ENCODE measurements at regions of chr1 and their contacts with region 1.

Region 1: DNA sequence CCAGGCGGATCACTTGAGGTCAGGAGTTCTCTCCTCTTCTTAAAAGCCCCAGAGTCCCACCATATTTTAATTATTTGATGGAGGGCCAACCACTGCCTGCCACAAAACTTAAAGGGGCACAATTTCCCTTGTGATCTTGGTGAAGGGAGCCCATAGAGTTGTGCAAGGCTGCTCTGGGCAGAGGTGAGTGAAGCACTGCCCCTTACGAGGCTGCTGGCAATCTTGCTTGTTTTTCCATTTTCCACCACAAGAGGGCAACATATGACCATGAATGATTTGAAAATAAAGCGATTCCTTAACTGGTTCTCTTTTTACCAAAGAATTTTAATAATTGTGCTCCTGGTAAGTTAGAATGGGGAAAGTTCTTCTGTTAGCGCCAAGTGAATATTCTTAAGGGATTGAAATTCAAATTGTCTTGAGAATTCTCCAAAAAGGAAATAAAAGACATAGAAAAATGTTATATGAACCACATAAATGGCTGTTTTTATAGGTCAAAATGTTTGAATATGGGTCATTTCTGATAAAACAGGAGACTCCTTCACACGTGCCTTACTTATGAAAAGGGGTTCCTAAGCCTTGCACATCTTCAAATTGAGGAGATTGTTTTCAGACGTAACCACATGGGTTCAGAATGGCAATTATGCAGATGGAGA is 22.7 kb downstream of the PGM1 start:
- DNase-seq: peak in 2 of 3 donors; percentile 31 to 47
- ATAC-seq: peak; percentile 63 to 66
- H3K4me3 ChIP-seq: no peak overlapping the region
- H3K27ac ChIP-seq: no peak overlapping the region
- H3K4me1 ChIP-seq: no peaks in the 10 kb centered on the region
- H3K27me3 ChIP-seq: no peaks in the 10 kb centered on the region

Region 2: DNA sequence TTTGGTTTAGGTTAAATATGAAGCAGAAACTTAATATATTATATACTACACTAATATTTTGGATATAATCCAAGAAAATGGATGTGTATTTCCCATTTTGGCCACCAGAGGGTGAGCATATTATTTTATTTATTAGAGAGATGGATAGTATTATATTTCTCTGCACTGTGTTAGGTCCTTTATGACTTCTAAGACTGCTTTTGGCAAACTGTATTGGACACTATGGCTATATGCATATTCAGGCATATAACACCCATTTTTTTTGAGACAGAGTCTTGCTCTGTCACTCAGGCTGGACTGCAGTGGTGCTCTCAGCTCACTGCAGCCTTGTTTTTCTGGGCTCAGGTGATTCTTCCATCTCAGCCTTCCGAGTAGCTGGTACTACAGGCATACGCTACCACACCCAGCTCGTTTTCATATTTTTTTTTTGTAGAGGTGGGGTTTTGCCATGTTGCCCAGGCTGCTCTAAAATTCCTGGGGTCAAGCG is 40.5 kb before region 1 on chr1:
- intact Hi-C with region 1: loop called in 1 of 4 experiments (anchors 2 kb)
- DNase-seq: no peak
- ATAC-seq: peak; percentile 16 to 51
- H3K4me3 ChIP-seq: no peak overlapping the region
- H3K27ac ChIP-seq: no peak overlapping the region
- H3K4me1 ChIP-seq: no peaks in the 10 kb centered on the region
- H3K27me3 ChIP-seq: no peaks in the 10 kb centered on the region